Right ventricle myocardium inferior (tissue), 1 donor: ENCODE measurements at regions of chr1 and their contacts with region 1.

Region 1: DNA sequence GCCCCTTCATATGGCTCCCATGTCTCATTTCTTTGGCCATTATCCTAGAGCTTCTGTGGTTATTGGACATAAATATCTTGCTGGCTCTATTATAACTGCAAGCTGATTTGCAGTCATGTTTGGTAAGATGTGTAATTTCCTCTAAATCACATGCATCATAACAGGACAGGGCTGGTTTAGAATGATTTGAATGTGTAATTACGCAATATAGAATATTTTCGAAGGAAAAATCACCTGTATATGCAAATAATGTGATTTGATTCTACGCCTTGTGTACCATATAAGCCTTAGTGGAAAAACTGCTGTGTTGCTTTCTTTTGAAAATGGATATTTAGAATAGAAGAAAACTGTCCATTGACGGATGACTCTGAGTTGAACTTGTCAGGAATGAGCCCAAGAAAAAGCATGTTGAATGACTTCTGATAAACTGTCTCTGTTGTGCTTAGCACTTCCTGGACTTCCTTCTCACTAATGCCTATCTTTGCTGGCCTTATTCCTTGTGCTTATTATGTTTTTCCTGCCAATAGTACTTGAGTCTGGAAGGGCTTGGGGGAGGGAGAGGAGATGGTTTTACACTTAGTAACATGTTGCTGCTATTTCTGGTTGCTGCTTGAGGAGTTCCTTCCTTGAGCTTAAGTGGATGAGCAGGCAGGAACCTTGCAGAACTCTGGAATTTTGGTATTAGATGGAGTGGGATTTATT is 6.5 kb downstream of the CACHD1 start:
- DNase-seq: no peak
- ATAC-seq: peak; percentile 82

Region 2: DNA sequence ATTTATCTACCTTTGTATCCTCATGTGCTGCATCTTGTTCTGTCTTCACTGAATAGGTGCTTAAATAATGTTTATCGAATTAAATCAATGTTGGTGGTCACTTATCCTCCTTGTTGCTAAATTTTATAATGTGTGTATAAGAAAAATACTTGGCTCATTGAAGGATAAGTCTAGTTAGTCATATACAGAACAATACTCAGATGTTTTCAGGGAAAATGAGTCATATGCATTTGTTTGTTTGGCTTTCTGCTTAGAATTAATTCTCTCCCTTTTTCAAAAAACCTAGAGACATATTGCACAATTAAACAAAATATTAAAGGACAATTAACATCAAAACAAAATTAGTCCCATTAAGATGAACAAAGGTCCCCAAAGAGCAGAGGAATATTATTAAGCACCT is 184.0 kb before region 1 on chr1:
- intact Hi-C with region 1: no loop called
- DNase-seq: no peak
- ATAC-seq: no peak

Region 3: DNA sequence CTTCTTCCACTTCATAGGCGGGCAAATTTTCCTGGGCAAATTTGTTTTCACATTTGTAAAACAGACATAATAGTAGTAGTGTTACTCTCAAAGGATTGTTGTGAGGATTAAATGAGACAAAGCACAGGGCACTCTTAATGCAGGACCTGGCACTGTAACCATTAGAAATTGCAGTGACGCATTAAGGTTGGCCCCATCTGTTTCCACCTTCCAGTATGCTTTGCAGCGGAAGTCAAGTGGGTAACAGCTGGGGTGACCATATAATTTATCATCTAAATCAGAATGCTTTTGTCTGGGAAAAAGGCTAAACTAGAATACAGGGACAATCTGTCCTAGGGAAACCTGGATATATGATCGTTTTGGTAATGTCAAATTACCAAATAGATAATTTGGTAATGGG is 138.9 kb before region 1 on chr1:
- intact Hi-C with region 1: no loop called
- DNase-seq: no peak
- ATAC-seq: no peak

Region 4: GRCh38 chr1:64356636-64357256 is 119.7 kb before region 1 on chr1:
- intact Hi-C with region 1: no loop called
- DNase-seq: no peak
- ATAC-seq: no peak

Region 5: GRCh38 chr1:64514197-64514765 is 37.9 kb after region 1 on chr1:
- intact Hi-C with region 1: loop called (anchors 5 kb)
- DNase-seq: no peak
- ATAC-seq: peak; percentile 62

Region 6: DNA sequence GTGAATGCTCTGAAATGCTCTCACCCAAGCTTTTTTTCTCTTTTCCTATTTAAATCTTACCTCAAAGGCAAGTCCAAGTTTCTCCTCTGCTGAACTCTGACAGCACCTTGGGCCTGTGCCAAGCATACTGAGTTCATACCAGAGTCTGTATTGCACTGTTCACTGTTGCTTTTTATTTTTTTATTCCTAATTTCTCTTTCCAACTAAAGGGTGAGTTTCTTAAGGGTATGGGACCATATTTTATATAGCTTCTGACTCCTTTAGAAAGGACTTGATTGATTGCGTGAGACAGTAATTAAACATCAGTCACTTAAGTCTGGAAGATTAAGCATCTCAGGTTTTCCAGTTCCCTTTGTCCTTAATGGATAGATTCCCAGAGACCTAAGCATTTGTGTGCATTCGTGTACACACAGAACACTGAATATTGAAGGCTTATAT is 63.4 kb after region 1 on chr1:
- intact Hi-C with region 1: loop called (anchors 2 kb)
- DNase-seq: peak; percentile 80
- ATAC-seq: peak; percentile 55